Cardiac septum (tissue), 1 donor: ENCODE measurements at regions of chr17 and their contacts with region 1.

Region 1: GRCh38 chr17:42129109-42129837 is 6.7 kb downstream of the HSPB9 start:
- DNase-seq: no peak

Region 2: GRCh38 chr17:42183741-42184711 is 54.8 kb after region 1 on chr17:
- intact Hi-C with region 1: loop called (anchors 5 kb)
- DNase-seq: peak; percentile 84